Activated CD8-positive, alpha-beta memory T cell treated with anti-CD3 and anti-CD28 coated beads, Interleukin-2, amount 10 ng/mL, durations not matched to agents 7 days and 5 days (primary cell): ENCODE measurements at regions of chr2 and their contacts with region 1.

Region 1: DNA sequence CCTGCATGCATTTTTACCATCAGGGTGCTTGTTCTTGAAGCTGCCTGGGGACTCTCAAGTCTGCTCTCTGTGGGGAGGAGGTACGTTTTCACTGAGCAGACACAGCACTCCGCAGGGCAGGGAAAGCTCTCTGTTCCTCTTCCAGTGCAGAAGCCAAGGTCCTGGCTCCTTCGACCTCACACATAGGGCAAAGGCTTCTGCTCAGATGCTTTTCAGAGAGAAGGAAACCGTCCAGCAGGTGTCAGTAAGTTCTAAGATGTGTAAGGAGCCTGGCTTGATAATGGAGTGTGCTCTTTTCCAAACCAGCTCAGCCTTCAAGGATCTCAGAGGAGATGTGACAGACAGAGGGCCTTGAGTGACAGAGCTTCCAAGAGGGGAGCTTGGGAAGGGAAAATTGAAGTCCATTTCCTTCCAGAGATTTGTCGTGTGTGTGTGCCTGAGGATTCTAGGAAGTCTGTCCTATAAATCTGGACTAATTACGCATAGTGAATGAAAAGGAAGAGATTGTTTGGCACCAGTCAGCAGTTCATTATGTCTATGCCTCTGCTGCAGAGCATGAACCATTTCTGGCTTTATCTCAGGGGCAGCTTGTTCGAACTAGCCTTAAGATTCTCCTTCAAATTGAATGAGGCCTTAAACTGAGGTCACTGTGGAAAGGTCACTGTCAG is 67.3 kb upstream of the UPP2 start:
- DNase-seq: no peak
- ATAC-seq: no peak
- H3K4me3 Mint-ChIP-seq: no peak overlapping the region
- H3K27ac Mint-ChIP-seq: no peak overlapping the region
- H3K4me1 Mint-ChIP-seq: no peaks in the 10 kb centered on the region
- H3K27me3 Mint-ChIP-seq: peaks cover 37% of the 10 kb centered on the region

Region 2: GRCh38 chr2:158753641-158754611 is 719.6 kb after region 1 on chr2:
- CTCF ChIA-PET with region 1: interaction called, 11 read pairs
- DNase-seq: no peak
- ATAC-seq: peak; percentile 55
- H3K4me3 Mint-ChIP-seq: no peak overlapping the region
- H3K27ac Mint-ChIP-seq: no peak overlapping the region
- H3K4me1 Mint-ChIP-seq: no peaks in the 10 kb centered on the region
- H3K27me3 Mint-ChIP-seq: peaks cover 6% of the 10 kb centered on the region